Caco-2 (cell line): ENCODE measurements at regions of chr16 and their contacts with region 1.

Region 1: DNA sequence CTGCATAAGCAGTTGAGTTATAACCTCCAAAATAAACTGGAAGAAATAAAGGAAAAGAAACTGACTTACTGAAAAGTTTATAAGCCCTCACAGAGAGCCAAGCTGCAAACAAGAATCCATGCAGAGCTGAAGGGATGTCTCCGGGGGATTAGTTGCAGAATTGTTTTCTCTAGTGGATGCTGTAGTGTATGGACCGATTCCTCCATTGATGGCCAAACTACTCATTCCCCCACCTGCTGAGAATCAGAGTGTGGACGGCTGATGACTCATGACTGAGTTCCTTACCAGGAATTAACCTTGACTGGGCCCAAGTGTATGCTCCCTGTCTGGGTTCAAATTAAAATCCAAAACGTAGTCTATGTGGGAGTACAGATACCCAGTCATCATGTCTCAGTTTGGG is 93.9 kb upstream of the CDH8 start:
- DNase-seq: no peak
- H3K4me3 ChIP-seq: no peak overlapping the region
- H3K4me3 Mint-ChIP-seq: no peak overlapping the region
- H3K27ac Mint-ChIP-seq: no peak overlapping the region
- H3K4me1 ChIP-seq: no peaks in the 10 kb centered on the region; the same call in 1 of the 2 replicates
- H3K4me1 Mint-ChIP-seq: no peaks in the 10 kb centered on the region
- H3K27me3 ChIP-seq: no peaks in the 10 kb centered on the region
- H3K27me3 Mint-ChIP-seq: peaks cover 6% of the 10 kb centered on the region
- CTCF ChIP-seq: no peak

Region 2: GRCh38 chr16:61148930-61149329 is 981.2 kb before region 1 on chr16:
- CTCF ChIA-PET with region 1: no interaction called
- POLR2A ChIA-PET with region 1: no interaction called
- intact Hi-C with region 1: loop called (anchors 2 kb)
- DNase-seq: peak in 1 of 2 experiments; percentile 8
- H3K4me3 ChIP-seq: no peak overlapping the region
- H3K4me3 Mint-ChIP-seq: no peak overlapping the region
- H3K27ac Mint-ChIP-seq: no peak overlapping the region
- H3K4me1 ChIP-seq: no peaks in the 10 kb centered on the region
- H3K4me1 Mint-ChIP-seq: no peaks in the 10 kb centered on the region
- H3K27me3 ChIP-seq: no peaks in the 10 kb centered on the region
- H3K27me3 Mint-ChIP-seq: no peaks in the 10 kb centered on the region
- CTCF ChIP-seq: peak; percentile 14 to 33

Region 3: DNA sequence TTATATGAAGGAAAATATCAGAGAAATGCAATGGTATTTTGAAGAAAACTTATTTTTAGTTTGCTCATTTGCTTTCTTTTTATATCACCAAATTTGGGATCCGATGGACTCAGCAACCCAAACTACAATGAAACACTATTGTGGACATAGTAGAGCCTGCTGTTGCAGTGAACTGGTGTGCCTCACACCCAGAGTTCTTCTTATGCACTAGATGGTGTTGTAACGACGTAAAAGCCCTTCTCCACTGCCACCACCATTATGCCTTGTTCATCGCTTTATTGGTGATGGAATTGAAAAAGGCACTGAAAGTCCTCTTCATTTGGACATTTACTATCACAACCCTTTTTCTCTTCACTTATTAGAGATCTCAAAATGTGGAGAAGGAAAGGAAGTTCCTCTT is 475.1 kb before region 1 on chr16:
- CTCF ChIA-PET with region 1: no interaction called
- POLR2A ChIA-PET with region 1: no interaction called
- intact Hi-C with region 1: loop called (anchors 10 kb)
- DNase-seq: no peak
- H3K4me3 ChIP-seq: no peak overlapping the region
- H3K4me3 Mint-ChIP-seq: no peak overlapping the region
- H3K27ac Mint-ChIP-seq: no peak overlapping the region
- H3K4me1 ChIP-seq: no peaks in the 10 kb centered on the region
- H3K4me1 Mint-ChIP-seq: no peaks in the 10 kb centered on the region
- H3K27me3 ChIP-seq: no peaks in the 10 kb centered on the region
- H3K27me3 Mint-ChIP-seq: no peaks in the 10 kb centered on the region
- CTCF ChIP-seq: no peak

Region 4: GRCh38 chr16:61936522-61936921 is 193.6 kb before region 1 on chr16:
- CTCF ChIA-PET with region 1: no interaction called
- POLR2A ChIA-PET with region 1: no interaction called
- intact Hi-C with region 1: loop called (anchors 1 kb)
- DNase-seq: peak in 1 of 2 experiments; percentile 26
- H3K4me3 ChIP-seq: no peak overlapping the region
- H3K4me3 Mint-ChIP-seq: no peak overlapping the region
- H3K27ac Mint-ChIP-seq: no peak overlapping the region
- H3K4me1 ChIP-seq: peaks cover 11% of the 10 kb centered on the region
- H3K4me1 Mint-ChIP-seq: peaks cover 2% of the 10 kb centered on the region
- H3K27me3 ChIP-seq: no peaks in the 10 kb centered on the region
- H3K27me3 Mint-ChIP-seq: no peaks in the 10 kb centered on the region
- CTCF ChIP-seq: peak; percentile 53 to 62

Region 5: GRCh38 chr16:62190426-62190825 is 60.3 kb after region 1 on chr16:
- CTCF ChIA-PET with region 1: no interaction called
- POLR2A ChIA-PET with region 1: no interaction called
- intact Hi-C with region 1: no loop called
- DNase-seq: peak in 1 of 2 experiments; percentile 21
- H3K4me3 ChIP-seq: no peak overlapping the region
- H3K4me3 Mint-ChIP-seq: no peak overlapping the region
- H3K27ac Mint-ChIP-seq: no peak overlapping the region
- H3K4me1 ChIP-seq: no peaks in the 10 kb centered on the region
- H3K4me1 Mint-ChIP-seq: no peaks in the 10 kb centered on the region
- H3K27me3 ChIP-seq: no peaks in the 10 kb centered on the region
- H3K27me3 Mint-ChIP-seq: peaks cover 5% of the 10 kb centered on the region
- CTCF ChIP-seq: peak; percentile 63 to 74